Panc1 (cell line): ENCODE measurements at regions of chrX and their contacts with region 1.

Region 1: DNA sequence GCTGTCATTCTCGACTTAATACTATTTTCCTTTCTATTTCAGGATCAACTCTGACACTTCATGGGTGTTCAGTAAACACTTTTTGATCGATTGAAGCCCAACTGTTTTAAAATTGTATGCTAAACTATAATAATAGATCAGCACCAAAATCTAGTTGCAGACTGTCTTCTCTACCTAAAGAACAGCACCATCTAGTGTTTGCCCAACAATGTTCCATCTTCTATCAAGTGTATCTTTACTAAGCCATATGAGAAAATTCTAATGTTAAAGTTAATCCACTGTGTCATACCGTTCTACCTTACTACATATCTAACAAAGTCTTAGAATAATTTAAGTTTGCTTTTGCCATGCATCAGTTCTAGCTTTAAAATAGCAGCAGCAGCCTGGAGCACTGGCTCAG is 113.0 kb upstream of the PRDX4 start:
- DNase-seq: peak; percentile 15
- ATAC-seq: no peak
- H3K4me3 ChIP-seq: no peak overlapping the region
- H3K27ac ChIP-seq: no peak overlapping the region
- H3K4me1 ChIP-seq: no peaks in the 10 kb centered on the region
- H3K27me3 ChIP-seq: no peaks in the 10 kb centered on the region
- CTCF ChIP-seq: peak; percentile 57; the same call in 1 of the 2 replicates

Region 2: GRCh38 chrX:22057667-22058066 is 1496.6 kb before region 1 on chrX:
- CTCF ChIA-PET with region 1: no interaction called
- POLR2A ChIA-PET with region 1: interaction called, 14 read pairs
- in situ Hi-C with region 1: no loop called
- intact Hi-C with region 1: no loop called
- DNase-seq: no peak
- ATAC-seq: no peak
- H3K4me3 ChIP-seq: no peak overlapping the region
- H3K27ac ChIP-seq: no peak overlapping the region
- H3K4me1 ChIP-seq: no peaks in the 10 kb centered on the region
- H3K27me3 ChIP-seq: no peaks in the 10 kb centered on the region
- CTCF ChIP-seq: no peak

Region 3: DNA sequence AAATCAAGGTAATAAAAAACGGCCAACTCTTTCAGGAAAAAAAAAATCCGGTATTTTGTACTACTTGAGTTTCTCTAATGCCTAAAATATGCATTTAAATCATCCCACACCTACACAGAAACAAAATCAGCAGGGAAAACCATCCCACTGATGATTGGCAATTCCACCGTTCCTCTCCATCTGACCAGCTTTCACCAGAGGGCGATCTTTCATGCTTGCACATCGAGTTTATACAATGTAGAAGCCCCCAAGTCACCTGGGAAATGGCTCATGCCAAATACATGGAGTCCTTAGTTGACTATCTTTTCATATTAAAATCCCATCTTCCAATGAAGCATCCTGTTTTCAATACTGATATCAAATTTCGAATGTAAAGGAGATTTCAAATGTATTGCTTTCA is 150.5 kb before region 1 on chrX:
- CTCF ChIA-PET with region 1: no interaction called
- POLR2A ChIA-PET with region 1: no interaction called
- in situ Hi-C with region 1: no loop called
- intact Hi-C with region 1: loop called (anchors 2 kb)
- DNase-seq: no peak
- ATAC-seq: no peak
- H3K4me3 ChIP-seq: no peak overlapping the region
- H3K27ac ChIP-seq: no peak overlapping the region
- H3K4me1 ChIP-seq: no peaks in the 10 kb centered on the region
- H3K27me3 ChIP-seq: no peaks in the 10 kb centered on the region
- CTCF ChIP-seq: peak; percentile 61

Region 4: GRCh38 chrX:23422912-23423311 is 131.4 kb before region 1 on chrX:
- CTCF ChIA-PET with region 1: no interaction called
- POLR2A ChIA-PET with region 1: no interaction called
- in situ Hi-C with region 1: no loop called
- intact Hi-C with region 1: no loop called
- DNase-seq: no peak
- ATAC-seq: no peak
- H3K4me3 ChIP-seq: no peak overlapping the region
- H3K27ac ChIP-seq: no peak overlapping the region
- H3K4me1 ChIP-seq: no peaks in the 10 kb centered on the region
- H3K27me3 ChIP-seq: no peaks in the 10 kb centered on the region
- CTCF ChIP-seq: no peak

Region 5: GRCh38 chrX:23603501-23603900 is 49.2 kb after region 1 on chrX:
- CTCF ChIA-PET with region 1: no interaction called
- POLR2A ChIA-PET with region 1: no interaction called
- in situ Hi-C with region 1: no loop called
- intact Hi-C with region 1: no loop called
- DNase-seq: no peak
- ATAC-seq: no peak
- H3K4me3 ChIP-seq: no peak overlapping the region
- H3K27ac ChIP-seq: no peak overlapping the region
- H3K4me1 ChIP-seq: no peaks in the 10 kb centered on the region
- H3K27me3 ChIP-seq: no peaks in the 10 kb centered on the region
- CTCF ChIP-seq: no peak

Region 6: DNA sequence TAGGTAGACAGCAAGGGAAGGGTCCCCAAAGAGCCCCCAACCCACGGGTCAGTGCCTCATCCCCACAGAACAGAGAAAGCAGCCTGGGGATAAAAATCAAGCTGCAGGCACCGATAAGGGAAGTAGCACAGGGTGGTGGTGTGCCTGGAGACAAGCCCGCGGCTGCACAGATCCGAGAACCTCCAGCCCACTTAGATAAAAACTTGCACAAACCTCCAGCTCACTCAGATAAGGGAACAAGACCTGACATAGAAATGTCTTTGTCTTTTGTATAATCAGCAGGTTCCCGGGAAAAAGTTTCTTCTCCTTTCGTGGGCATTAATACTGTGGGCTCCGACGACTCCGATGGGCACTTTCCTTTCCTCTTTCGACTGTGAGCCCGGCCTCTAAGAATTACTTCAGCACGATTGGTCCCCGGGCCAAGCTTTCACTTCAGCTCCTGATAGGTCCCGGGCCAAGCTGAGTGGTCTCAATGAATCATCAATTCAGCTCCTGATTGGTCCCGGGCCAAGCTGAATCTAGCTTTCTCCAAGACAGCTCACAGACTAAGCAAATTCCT is 145.4 kb after region 1 on chrX:
- CTCF ChIA-PET with region 1: no interaction called
- POLR2A ChIA-PET with region 1: no interaction called
- in situ Hi-C with region 1: no loop called
- intact Hi-C with region 1: no loop called
- DNase-seq: no peak
- ATAC-seq: no peak
- H3K4me3 ChIP-seq: no peak overlapping the region
- H3K27ac ChIP-seq: no peak overlapping the region
- H3K4me1 ChIP-seq: no peaks in the 10 kb centered on the region
- H3K27me3 ChIP-seq: no peaks in the 10 kb centered on the region
- CTCF ChIP-seq: no peak